Naive thymus-derived CD4-positive, alpha-beta T cell (primary cell): ENCODE measurements at regions of chr10 and their contacts with region 1.

Region 1: GRCh38 chr10:119725828-119726675 is at the start of gene INPP5F:
- DNase-seq: peak; percentile 95 to 100 (median 96)
- ATAC-seq: peak; percentile 98
- H3K4me3 ChIP-seq: peak within 1 kb of the TSS; percentile 78
- H3K4me3 Mint-ChIP-seq: peak within 1 kb of the TSS; percentile 89 to 95 (median 94)
- H3K27ac ChIP-seq: peak within 1 kb of the TSS; percentile 76
- H3K27ac Mint-ChIP-seq: peak within 1 kb of the TSS; percentile 71 to 92 (median 87)
- H3K4me1 ChIP-seq: peaks cover 11 to 24% of the 10 kb centered on the region in 2 donors
- H3K4me1 Mint-ChIP-seq: peaks cover 25 to 53% (median 38%) of the 10 kb centered on the region in 7 donors
- H3K27me3 ChIP-seq: no peaks in the 10 kb centered on the region
- H3K27me3 Mint-ChIP-seq: no peaks in the 10 kb centered on the region
- total RNA-seq, gene INPP5F: 8.5 to 12.1 (median 10.0) TPM

Region 2: DNA sequence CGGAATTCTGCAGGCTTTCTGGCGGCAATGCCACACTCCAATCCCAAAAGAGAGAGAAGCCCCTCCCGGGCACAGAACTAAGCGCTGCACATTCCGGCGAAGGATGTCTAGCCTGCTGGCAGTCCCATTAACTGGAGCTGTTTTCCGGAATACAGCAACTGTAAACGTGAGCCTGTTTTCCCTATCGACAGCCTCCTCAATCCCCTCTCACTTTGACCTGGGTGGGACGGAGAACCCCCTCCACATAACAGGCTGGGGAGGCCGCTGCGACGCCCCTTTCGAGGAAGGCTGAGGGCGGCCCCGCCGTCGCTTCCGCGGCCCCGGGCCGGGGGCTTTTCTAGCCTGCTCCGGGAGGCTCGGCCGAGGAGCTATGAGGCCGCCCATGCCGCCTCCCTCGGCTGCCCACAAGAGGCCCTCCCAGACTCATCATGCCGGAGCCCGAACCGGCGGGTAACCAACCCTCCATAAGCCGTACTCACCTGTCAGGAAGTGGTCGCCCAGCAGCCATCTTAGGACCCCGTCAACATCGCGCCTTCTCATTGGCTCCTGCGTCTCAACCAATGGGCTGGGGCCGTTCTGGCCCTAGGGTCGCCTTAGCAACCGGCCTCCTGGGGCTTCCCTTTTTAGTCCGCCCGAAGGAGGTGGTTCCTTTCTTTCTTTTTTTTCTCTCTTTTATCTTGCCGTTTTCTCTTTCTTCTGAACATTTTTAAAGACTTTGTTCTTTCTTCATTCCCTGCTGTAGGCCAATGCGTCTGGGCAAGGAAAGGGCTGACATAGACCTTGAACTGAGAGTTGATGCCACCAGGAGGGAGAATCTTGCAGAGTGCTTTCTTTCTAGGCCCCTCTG is 1384.0 kb before region 1 on chr10 and contains the start of gene FAM204A:
- CTCF ChIA-PET with region 1: no interaction called
- POLR2A ChIA-PET with region 1: no interaction called
- intact Hi-C with region 1: loop called in 1 of 2 experiments (anchors 5 kb)
- DNase-seq: peak; percentile 92 to 99 (median 97)
- ATAC-seq: peak; percentile 99
- H3K4me3 ChIP-seq: peak within 1 kb of the TSS; percentile 69
- H3K4me3 Mint-ChIP-seq: peak within 1 kb of the TSS; percentile 88 to 98 (median 96)
- H3K27ac ChIP-seq: peak within 1 kb of the TSS; percentile 78
- H3K27ac Mint-ChIP-seq: peak within 1 kb of the TSS; percentile 84 to 98 (median 95)
- H3K4me1 ChIP-seq: peaks cover 22% of the 10 kb centered on the region in 2 donors
- H3K4me1 Mint-ChIP-seq: peaks cover 20 to 69% (median 59%) of the 10 kb centered on the region in 7 donors
- H3K27me3 ChIP-seq: no peaks in the 10 kb centered on the region
- H3K27me3 Mint-ChIP-seq: peaks cover 0 to 2% (median 0%) of the 10 kb centered on the region in 5 donors
- total RNA-seq, gene FAM204A: 56.6 to 69.6 (median 63.0) TPM

Region 3: GRCh38 chr10:119103903-119104652 is 622.0 kb before region 1 on chr10 and contains the start of gene DENND10:
- CTCF ChIA-PET with region 1: no interaction called
- POLR2A ChIA-PET with region 1: no interaction called
- intact Hi-C with region 1: loop called in 1 of 2 experiments (anchors 1 kb)
- DNase-seq: peak; percentile 18 to 80 (median 51)
- ATAC-seq: peak; percentile 93
- H3K4me3 ChIP-seq: peak within 1 kb of the TSS; percentile 45
- H3K4me3 Mint-ChIP-seq: peak within 1 kb of the TSS; percentile 65 to 94 (median 85)
- H3K27ac ChIP-seq: peak within 1 kb of the TSS; percentile 69
- H3K27ac Mint-ChIP-seq: peak within 1 kb of the TSS; percentile 62 to 96 (median 84)
- H3K4me1 ChIP-seq: peaks cover 6 to 20% of the 10 kb centered on the region in 2 donors
- H3K4me1 Mint-ChIP-seq: peaks cover 5 to 35% (median 14%) of the 10 kb centered on the region in 7 donors
- H3K27me3 ChIP-seq: no peaks in the 10 kb centered on the region
- H3K27me3 Mint-ChIP-seq: no peaks in the 10 kb centered on the region
- total RNA-seq, gene DENND10: 22.1 to 41.7 (median 28.8) TPM

Region 4: DNA sequence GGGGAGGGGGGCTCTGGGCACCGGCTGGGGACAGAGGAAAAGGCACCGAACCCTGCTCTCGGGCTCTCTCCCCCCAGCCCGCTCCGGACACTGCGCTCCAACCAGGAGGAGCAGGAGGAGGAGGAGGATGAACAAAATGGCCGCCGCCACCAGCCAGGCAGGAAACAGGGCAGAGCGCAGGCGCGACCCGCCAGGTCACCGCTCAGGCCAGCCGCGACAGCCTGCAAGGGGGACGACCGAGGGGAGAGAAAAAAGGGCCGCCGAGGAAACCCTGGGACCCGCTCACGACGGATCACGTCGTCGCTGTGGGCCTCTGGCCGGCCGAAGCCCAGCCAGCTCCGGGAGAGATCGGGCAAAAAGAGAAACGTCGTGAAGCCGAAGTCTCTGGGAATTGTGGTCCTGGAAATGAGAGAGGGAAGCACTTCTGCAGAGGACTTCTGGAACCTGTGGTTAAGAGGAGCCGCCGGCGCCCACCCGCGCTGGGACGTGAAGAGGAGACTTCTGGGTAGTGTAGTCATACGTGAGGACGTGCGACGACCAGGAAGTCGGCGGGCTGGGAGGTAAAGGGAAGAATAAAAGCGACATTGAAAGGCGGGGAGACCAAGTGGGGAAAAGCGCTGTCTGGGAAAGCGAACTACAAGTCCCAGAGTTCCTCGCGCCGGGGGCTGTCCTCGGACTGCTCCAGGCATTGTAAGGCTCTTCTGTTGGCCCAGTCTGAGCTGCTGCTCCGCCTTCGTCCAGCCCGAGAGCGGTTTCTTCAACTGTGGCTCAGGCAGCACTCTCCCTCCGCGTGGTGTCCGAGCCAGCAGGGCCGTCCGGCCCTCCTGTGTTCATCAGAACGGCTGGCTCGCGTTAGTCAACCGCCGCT is 129.3 kb before region 1 on chr10 and contains the start of gene TIAL1:
- CTCF ChIA-PET with region 1: interaction called, 3 read pairs
- POLR2A ChIA-PET with region 1: no interaction called
- intact Hi-C with region 1: loop called (anchors 1 kb)
- DNase-seq: peak; percentile 73 to 95 (median 89)
- ATAC-seq: peak; percentile 88
- H3K4me3 ChIP-seq: peak within 1 kb of the TSS; percentile 96
- H3K4me3 Mint-ChIP-seq: peak within 1 kb of the TSS; percentile 85 to 99 (median 96)
- H3K27ac ChIP-seq: peak within 1 kb of the TSS; percentile 98
- H3K27ac Mint-ChIP-seq: peak within 1 kb of the TSS; percentile 90 to 99 (median 96)
- H3K4me1 ChIP-seq: peaks cover 28 to 38% of the 10 kb centered on the region in 2 donors
- H3K4me1 Mint-ChIP-seq: peaks cover 35 to 56% (median 48%) of the 10 kb centered on the region in 7 donors
- H3K27me3 ChIP-seq: no peaks in the 10 kb centered on the region
- H3K27me3 Mint-ChIP-seq: no peaks in the 10 kb centered on the region
- total RNA-seq, gene TIAL1: 166 to 228 (median 176) TPM

Region 5: GRCh38 chr10:119686439-119687191 is 39.4 kb before region 1 on chr10:
- CTCF ChIA-PET with region 1: interaction called, 10 read pairs
- POLR2A ChIA-PET with region 1: interaction called, 3 read pairs
- intact Hi-C with region 1: loop called (anchors 1 kb)
- DNase-seq: peak; percentile 62 to 80 (median 75)
- ATAC-seq: peak; percentile 92
- H3K4me3 ChIP-seq: peak overlapping the region; percentile 58
- H3K4me3 Mint-ChIP-seq: peak overlapping the region; percentile 51 to 86 (median 76)
- H3K27ac ChIP-seq: peak overlapping the region; percentile 40
- H3K27ac Mint-ChIP-seq: peak overlapping the region in 8 of 9 donors; percentile 2 to 87 (median 63)
- H3K4me1 ChIP-seq: peaks cover 0 to 6% of the 10 kb centered on the region in 2 donors
- H3K4me1 Mint-ChIP-seq: peaks cover 12 to 25% (median 21%) of the 10 kb centered on the region in 7 donors
- H3K27me3 ChIP-seq: no peaks in the 10 kb centered on the region
- H3K27me3 Mint-ChIP-seq: peaks cover 0 to 3% (median 0%) of the 10 kb centered on the region in 5 donors

Region 6: DNA sequence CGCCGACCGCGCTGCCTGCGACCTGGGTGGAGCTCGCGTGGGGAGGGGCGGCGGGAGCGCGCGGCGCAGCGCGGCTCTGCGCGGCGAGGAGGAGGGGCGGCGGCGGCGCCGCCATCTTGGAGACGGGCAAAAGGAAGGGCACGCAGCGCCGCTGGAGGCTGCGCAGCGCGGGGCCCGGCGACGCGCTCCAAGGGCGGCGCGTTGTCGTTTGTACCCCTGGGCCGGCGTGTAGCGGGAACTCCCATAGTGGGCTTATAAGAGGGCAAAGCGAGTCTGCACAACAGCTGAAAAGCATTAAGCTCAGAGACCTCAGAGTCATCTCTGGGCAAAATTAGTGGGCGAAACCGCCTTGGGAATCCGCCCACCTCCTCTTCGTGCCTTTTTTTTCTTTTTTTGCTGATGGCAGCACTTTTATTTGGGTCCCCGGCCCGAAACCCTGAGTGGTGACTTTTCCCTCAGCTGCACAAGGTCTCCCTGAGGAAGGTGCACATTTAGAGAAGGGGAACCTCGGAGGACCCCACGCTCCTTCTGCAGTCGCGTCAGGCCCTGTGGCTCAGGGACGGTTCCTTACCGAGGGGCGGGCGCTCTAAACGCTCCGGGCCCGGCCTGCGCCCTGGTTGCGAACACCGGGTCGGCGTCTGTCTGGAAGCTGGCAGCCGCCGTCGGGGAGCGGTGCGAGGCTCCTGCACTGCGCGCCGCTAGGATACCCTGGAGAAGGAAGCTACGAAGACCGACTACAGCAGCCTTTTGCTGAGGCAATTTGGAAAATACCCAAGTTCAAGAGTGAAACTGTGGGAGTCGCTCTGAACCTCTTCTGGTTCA is 147.0 kb after region 1 on chr10:
- CTCF ChIA-PET with region 1: no interaction called
- POLR2A ChIA-PET with region 1: interaction called, 16 read pairs
- intact Hi-C with region 1: loop called (anchors 1 to 2 kb)
- DNase-seq: peak; percentile 81 to 88 (median 86)
- ATAC-seq: peak; percentile 96
- H3K4me3 ChIP-seq: peak overlapping the region; percentile 97
- H3K4me3 Mint-ChIP-seq: peak overlapping the region; percentile 82 to 92 (median 89)
- H3K27ac ChIP-seq: peak overlapping the region; percentile 84
- H3K27ac Mint-ChIP-seq: peak overlapping the region; percentile 79 to 95 (median 92)
- H3K4me1 ChIP-seq: peaks cover 21 to 28% of the 10 kb centered on the region in 2 donors
- H3K4me1 Mint-ChIP-seq: peaks cover 23 to 46% (median 41%) of the 10 kb centered on the region in 7 donors
- H3K27me3 ChIP-seq: no peaks in the 10 kb centered on the region
- H3K27me3 Mint-ChIP-seq: peaks cover 0 to 6% (median 0%) of the 10 kb centered on the region in 5 donors